ENCODE measurements at regions of chr7 and their contacts with region 1.

Region 1: GRCh38 chr7:31633894-31634494 is 53.0 kb upstream of the PPP1R17 start:
- DNase-seq: peak; percentile 86
- H3K4me3 ChIP-seq: no peak overlapping the region
- H3K27ac ChIP-seq: peak overlapping the region; percentile 34
- H3K4me1 ChIP-seq: peaks cover 13% of the 10 kb centered on the region
- H3K27me3 ChIP-seq: no peaks in the 10 kb centered on the region
- CTCF ChIP-seq: peak; percentile 83

Region 2: DNA sequence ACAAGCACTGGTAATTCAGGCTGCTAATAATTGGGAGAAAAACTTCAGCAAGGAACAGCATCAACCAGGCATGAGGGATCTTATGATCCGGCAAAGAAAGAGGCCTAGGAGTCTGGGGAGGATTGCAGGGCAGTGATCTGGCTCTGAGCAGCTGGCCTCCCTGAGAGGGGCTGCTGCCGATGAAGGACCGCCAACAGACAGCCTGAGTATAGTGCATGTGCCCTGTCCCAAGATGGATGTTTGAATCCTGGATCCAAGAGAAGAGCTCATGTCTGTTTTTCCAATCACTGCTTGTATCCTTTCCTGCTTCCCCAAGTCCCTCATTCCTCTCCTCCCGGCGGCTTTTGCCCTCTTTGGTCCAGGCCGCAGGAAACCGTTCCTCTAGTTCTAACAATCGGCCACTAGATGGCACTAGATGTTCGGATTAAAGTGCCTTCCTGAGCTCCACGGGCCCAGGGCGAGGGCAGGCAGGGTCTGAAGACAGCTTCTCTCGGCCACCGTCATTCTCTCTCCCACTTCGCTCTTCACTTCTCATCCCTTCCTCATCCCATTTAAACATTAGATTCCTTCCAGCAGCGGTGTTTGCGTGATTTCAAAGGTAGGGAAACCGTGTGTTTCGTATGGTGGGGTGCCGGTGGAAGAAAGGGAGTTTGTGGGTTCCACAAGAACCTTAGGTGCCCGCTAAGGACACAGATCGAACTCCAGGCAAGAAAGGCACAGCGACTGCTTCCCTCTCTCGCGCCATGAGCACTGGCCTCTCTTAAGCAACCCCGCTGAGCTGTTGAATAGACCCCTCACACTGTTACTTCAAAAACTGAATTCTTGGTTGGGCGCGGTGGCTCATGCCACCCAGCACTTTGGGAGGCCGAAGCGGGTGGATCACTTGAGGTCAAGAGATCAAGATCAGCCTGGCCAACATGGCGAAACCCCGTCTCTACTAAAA is 499.5 kb before region 1 on chr7:
- CTCF ChIA-PET with region 1: interaction called, 16 read pairs
- POLR2A ChIA-PET with region 1: no interaction called
- intact Hi-C with region 1: loop called (anchors 2 kb)
- DNase-seq: peak; percentile 91
- H3K4me3 ChIP-seq: no peak overlapping the region
- H3K27ac ChIP-seq: no peak overlapping the region
- H3K4me1 ChIP-seq: no peaks in the 10 kb centered on the region
- H3K27me3 ChIP-seq: no peaks in the 10 kb centered on the region
- CTCF ChIP-seq: peak; percentile 75

Region 3: DNA sequence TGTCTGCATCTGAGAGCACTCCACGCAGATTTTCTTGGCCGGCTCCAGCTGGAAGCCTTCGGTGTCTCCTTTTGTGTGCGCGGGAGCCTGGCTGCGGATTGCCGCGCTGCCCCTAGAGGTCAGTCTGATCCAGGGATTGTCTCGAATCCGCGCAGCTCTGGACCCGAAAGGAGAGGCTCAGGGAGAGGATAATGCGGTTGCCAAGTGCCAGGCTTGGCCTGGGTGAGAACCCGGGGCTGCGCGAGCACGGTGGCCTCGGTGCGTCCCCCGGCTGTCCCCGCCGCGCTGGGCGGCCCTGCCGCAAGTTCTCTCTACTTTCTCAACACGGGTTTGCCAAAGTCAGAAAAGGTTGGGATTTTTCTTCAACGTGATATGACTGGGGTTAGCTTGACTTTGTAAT is 441.0 kb before region 1 on chr7:
- CTCF ChIA-PET with region 1: interaction called, 7 read pairs
- POLR2A ChIA-PET with region 1: no interaction called
- intact Hi-C with region 1: loop called (anchors 1 kb)
- DNase-seq: peak; percentile 95
- H3K4me3 ChIP-seq: no peak overlapping the region
- H3K27ac ChIP-seq: peak overlapping the region; percentile 41
- H3K4me1 ChIP-seq: peaks cover 11% of the 10 kb centered on the region
- H3K27me3 ChIP-seq: no peaks in the 10 kb centered on the region
- CTCF ChIP-seq: peak; percentile 97

Region 4: GRCh38 chr7:31443457-31443856 is 190.5 kb before region 1 on chr7:
- CTCF ChIA-PET with region 1: interaction called, 15 read pairs
- POLR2A ChIA-PET with region 1: no interaction called
- intact Hi-C with region 1: loop called (anchors 1 kb)
- DNase-seq: peak; percentile 89
- H3K4me3 ChIP-seq: no peak overlapping the region
- H3K27ac ChIP-seq: peak overlapping the region; percentile 54
- H3K4me1 ChIP-seq: peaks cover 21% of the 10 kb centered on the region
- H3K27me3 ChIP-seq: no peaks in the 10 kb centered on the region
- CTCF ChIP-seq: peak; percentile 83

Region 5: DNA sequence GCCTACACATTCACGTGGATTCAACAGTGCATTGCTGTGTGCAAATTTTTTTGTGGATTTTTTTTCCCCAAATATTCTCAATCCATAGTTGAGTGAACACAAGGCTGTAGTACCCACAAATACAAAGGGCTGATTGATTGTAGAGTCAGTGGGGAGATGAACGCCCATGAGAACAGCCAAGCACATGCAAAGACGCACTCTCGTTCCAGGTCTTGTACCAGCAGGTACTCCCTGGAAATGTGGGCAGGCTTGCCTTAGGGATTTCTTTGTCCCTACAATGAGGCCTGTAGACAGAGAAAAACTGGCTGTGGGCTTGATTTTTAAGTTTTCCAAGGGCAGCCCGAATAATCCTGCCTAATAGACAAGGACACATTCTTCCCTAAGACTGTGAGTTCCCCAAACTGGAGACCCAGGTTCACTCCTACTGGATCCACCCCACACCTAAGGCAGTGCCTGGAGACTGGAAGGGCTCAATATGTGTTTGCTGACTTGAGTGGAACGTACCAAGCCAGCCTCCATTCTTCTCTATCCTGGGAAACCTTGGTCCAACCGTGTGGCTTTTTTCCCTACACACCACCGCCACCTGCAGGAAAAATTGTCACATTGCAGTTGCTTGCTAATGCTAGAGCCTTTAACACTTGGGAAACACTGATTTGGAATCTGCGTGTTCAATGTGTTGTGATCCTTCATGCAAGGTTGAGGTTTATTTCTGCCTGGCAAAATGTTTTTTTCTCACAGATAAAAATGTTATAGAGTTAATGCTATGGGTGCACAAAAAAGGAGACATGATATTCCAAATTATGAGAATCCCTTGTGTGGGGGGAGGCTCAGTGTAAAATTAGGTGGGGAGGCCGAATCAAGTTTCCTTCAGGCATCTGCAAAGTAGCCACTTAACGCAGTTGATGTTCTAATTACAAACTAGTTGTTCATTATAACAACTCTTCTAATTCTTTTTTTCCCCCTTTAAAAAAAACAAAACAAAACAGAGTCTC is 102.3 kb after region 1 on chr7:
- CTCF ChIA-PET with region 1: no interaction called
- POLR2A ChIA-PET with region 1: no interaction called
- intact Hi-C with region 1: no loop called
- DNase-seq: peak; percentile 87
- H3K4me3 ChIP-seq: no peak overlapping the region
- H3K27ac ChIP-seq: no peak overlapping the region
- H3K4me1 ChIP-seq: peaks cover 4% of the 10 kb centered on the region
- H3K27me3 ChIP-seq: no peaks in the 10 kb centered on the region
- CTCF ChIP-seq: peak; percentile 91

Measured in A673 (cell line).